ENCODE measurements at regions of chr7 and their contacts with region 1.

Region 1: DNA sequence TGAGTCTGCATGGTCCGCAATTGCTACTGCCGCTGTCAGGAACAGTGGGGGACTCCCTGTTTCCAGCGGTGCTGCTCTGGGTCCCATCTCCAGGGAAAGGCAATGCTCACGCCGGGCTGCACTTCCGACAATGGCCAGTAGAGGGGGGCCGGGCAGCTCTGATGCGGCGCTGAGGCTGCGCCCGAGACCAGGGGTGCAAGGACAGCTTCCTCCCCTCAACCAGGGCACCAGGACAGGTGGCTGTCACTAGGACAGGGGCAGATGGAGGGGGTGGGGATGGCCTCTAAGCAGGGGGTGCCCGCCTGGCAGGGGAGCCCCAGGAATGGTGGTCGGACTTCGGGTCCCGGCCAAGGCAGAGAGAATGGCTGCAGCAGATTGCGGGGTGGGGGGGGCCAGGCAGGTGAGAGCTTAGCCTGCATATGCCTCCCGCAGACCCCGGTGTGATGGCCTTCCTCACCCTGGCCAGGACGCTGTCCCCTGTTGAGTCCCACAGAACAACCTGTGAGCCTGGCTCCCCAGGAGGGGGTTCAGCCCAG is 71.0 kb upstream of the KCTD7 start:
- ATAC-seq: peak; percentile 74 to 87 (median 82)
- H3K4me3 ChIP-seq: no peak overlapping the region
- H3K27ac ChIP-seq: no peak overlapping the region
- H3K4me1 ChIP-seq: no peaks in the 10 kb centered on the region

Region 2: GRCh38 chr7:66779669-66780409 is 222.2 kb after region 1 on chr7:
- in situ Hi-C with region 1: loop called in 1 of 9 experiments (anchors 25 kb)
- ATAC-seq: peak in 2 of 8 experiments; percentile 43 to 56
- H3K4me3 ChIP-seq: no peak overlapping the region
- H3K27ac ChIP-seq: no peak overlapping the region
- H3K4me1 ChIP-seq: peaks cover 0 to 3% of the 10 kb centered on the region in 2 donors